ENCODE measurements at regions of chr1 and their contacts with region 1.

Region 1: DNA sequence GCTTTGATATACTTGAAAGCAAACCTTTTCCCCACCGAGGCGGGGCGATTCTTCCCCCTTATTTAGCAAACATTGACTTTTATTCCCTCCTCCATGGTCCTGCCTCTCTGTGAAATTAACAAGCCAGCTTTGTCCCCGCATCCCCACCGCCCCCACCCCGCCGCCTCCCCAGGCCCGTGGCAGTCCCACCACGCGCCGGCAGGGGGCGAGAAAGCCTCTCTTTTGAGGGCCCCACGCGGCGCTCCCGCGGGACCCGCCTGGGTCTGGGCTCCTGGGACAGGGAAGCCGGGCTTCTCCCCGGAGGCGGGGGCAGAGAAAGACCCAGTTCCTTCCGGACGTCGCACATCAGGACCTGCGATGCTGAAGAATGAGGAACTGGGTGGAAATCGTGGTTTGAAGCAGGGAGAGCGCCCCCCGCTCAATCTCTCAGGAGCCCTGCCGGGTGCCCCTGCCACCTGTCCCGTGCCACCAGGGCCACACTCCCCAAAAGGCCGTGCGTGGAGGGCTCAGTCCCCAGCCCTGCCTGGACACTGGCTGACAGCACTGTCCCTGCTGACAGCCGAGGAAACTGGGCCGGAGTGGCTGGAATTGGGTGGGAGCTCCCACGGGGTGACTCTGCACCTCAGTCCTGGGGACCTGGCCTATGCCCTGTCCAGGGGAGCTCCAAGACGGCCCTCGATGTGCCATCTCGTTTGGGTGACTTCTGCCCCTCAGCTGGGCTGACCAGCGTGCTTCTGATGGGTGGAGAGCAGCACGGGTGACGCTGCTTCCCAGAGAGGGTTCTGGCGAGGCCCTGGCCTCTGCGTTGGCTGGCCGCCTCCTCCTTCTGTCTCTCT is 8.6 kb upstream of the ACTRT2 start:
- DNase-seq: peak; percentile 66
- H3K4me3 ChIP-seq: peak overlapping the region in 2 of 4 donors; percentile 12 to 28
- H3K27ac ChIP-seq: no peak overlapping the region
- H3K4me1 ChIP-seq: peaks cover 0 to 16% (median 13%) of the 10 kb centered on the region in 4 donors
- H3K27me3 ChIP-seq: peaks cover 14 to 88% (median 60%) of the 10 kb centered on the region in 3 donors
- CTCF ChIP-seq: peak in 3 of 4 experiments; percentile 56 to 92 (median 60)
- EP300 ChIP-seq: no peak
- POLR2A ChIP-seq: no peak

Region 2: GRCh38 chr1:3283849-3284248 is 271.2 kb after region 1 on chr1:
- intact Hi-C with region 1: loop called (anchors 1 kb)
- DNase-seq: no peak
- H3K4me3 ChIP-seq: no peak overlapping the region
- H3K27ac ChIP-seq: no peak overlapping the region
- H3K4me1 ChIP-seq: peaks cover 0 to 7% (median 3%) of the 10 kb centered on the region in 4 donors
- H3K27me3 ChIP-seq: peaks cover 9 to 72% (median 43%) of the 10 kb centered on the region in 3 donors
- CTCF ChIP-seq: peak; percentile 31 to 77 (median 67)
- EP300 ChIP-seq: no peak
- POLR2A ChIP-seq: no peak

Region 3: DNA sequence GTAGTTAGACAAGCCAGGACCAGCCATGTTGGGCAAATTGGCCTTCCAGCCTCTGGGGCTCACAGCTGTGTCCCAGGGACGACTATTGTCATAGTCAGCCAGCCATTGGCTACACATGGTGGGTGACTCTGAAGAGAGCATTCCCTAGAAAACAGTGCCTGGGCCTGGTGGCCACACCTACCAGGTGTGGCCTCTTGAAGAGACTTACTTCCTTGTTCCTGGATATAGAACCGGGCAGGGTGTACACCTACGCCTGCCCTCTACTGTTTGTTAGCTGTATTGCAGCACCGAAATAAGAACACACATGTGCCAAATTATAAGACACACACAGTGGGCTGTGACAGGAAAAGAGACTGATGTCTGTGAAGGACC is 307.2 kb after region 1 on chr1:
- intact Hi-C with region 1: loop called (anchors 5 kb)
- DNase-seq: no peak
- H3K4me3 ChIP-seq: no peak overlapping the region
- H3K27ac ChIP-seq: no peak overlapping the region
- H3K4me1 ChIP-seq: peaks cover 0 to 39% (median 34%) of the 10 kb centered on the region in 4 donors
- H3K27me3 ChIP-seq: peaks cover 5 to 20% (median 10%) of the 10 kb centered on the region in 3 donors
- CTCF ChIP-seq: peak in 3 of 4 experiments; percentile 61 to 75 (median 65)
- EP300 ChIP-seq: no peak
- POLR2A ChIP-seq: no peak

Region 4: DNA sequence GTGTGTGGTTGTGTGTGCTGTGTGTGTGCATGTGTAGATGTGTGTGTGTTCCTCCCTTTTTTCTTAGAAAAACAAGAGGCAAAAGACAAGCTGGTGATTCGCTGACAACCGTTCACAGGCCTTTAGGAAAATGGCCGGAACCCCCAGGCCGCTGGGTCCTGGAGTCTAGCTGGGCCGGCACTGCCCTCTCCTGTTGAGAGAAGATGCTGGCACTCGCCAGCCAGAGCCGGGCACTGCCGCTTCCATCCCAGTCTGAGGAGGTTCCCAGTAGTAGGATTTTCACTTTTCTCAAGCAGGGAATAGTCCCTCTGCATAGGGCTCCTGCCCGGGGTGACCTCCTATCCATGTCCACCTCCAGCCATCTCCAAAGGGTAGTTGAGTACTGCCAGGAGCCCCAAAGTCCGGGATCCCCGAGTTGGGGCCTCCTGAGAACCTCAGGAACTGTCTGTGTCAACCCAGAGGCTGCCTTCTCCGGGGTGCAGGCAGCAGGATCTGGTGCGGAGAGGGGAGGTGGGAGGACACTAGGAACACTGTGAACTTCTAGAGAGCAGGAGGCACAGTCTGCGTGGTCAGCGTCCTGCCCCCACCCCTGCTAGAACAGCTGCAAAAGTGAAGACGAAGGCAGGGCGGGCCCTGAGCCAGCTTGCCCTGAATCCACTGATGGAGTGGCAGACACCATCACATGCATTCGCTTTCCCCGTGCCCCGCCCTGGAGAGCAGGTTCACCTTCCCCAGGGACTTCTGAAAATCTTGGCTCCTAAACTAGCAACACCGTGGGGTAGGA is 397.7 kb after region 1 on chr1:
- intact Hi-C with region 1: loop called (anchors 1 kb)
- DNase-seq: no peak
- H3K4me3 ChIP-seq: no peak overlapping the region
- H3K27ac ChIP-seq: no peak overlapping the region
- H3K4me1 ChIP-seq: no peaks in the 10 kb centered on the region
- H3K27me3 ChIP-seq: peaks cover 3 to 86% (median 60%) of the 10 kb centered on the region in 3 donors
- CTCF ChIP-seq: peak; percentile 27 to 71 (median 62)
- EP300 ChIP-seq: no peak
- POLR2A ChIP-seq: no peak

Region 5: DNA sequence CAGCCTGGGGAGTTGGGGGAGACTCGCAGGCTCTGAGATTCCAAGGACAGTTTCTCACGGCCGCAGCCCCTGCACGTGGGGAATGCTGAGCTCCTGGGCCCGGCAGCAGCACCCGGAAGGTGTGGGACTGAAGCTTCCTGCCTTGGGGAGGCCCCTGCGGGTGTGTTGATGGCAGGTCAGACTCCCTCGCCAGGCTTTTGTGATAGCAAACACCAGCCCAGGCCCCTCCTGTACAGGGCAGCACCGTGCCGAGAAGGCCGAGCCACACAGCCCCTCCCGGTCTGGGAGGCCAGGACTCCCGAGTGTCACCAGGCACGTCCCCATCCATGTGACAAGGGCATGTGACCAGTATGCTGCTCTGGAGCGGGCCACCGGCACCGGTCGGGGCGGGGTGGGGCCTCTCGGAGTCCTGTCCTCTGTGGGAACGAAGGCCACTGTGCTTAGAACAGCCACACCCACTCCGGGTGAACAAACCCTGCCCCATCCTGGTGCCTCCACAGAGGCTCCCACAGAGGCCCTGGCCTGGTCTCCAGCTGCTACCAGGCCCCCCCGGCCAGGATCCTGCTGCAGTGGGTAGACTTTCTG is 410.7 kb after region 1 on chr1:
- intact Hi-C with region 1: loop called (anchors 1 kb)
- DNase-seq: no peak
- H3K4me3 ChIP-seq: no peak overlapping the region
- H3K27ac ChIP-seq: peak overlapping the region in 2 of 4 donors; percentile 34 to 49
- H3K4me1 ChIP-seq: peaks cover 0 to 5% (median 2%) of the 10 kb centered on the region in 4 donors
- H3K27me3 ChIP-seq: peaks cover 3 to 61% (median 33%) of the 10 kb centered on the region in 3 donors
- CTCF ChIP-seq: no peak
- EP300 ChIP-seq: no peak
- POLR2A ChIP-seq: peak in 1 of 2 donors; percentile 17